ENCODE measurements at regions of chr12 and their contacts with region 1.

Region 1: DNA sequence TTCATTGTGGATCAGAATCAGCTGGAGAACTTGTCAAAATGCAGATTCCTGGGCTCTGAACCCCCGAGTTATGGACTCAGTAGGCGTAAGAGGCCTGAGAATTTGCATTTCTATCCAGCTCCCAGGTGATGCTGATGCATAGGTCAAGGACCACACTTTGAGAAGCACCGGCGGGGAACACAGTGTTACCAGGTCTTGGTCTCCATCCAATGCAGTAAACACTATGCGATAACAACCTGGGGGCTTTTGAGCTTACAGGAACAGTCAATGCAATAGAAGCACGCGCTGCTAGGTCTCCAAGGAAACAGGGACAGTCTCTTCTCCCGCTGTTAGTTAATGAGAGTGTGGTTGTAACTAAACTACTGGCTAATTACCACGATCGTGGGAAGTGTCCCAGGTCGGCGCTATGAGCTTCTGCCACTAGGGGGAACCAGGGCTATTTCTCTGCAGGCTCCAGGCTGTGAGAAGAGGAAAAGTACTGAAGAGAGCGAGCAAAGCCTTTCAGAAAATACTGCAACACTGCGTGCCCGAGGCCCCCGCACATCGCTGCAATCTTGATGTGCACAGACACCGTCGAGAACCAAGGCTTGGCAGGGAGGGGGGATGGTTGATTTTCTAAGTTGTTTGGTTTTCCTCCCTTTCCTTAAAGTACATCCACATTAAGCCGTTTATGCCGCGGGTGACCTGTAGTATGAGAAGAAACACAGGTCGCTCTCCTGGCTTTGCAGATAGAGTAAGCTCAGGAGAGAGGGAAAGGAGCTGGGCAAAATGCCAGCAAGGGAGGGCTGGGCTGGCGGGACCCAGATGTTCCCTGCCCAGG is 52.0 kb upstream of the KCNA1 start:
- DNase-seq: peak; percentile 39
- H3K4me3 ChIP-seq: no peak overlapping the region
- H3K27ac ChIP-seq: no peak overlapping the region
- H3K4me1 ChIP-seq: no peaks in the 10 kb centered on the region
- H3K27me3 ChIP-seq: no peaks in the 10 kb centered on the region
- CTCF ChIP-seq: peak; percentile 88 to 93

Region 2: GRCh38 chr12:4472046-4472445 is 385.6 kb before region 1 on chr12:
- CTCF ChIA-PET with region 1: no interaction called
- dilution Hi-C with region 1: no loop called
- in situ Hi-C with region 1: no loop called
- intact Hi-C with region 1: no loop called
- DNase-seq: no peak
- H3K4me3 ChIP-seq: no peak overlapping the region
- H3K27ac ChIP-seq: no peak overlapping the region
- H3K4me1 ChIP-seq: peaks cover 3% of the 10 kb centered on the region
- H3K27me3 ChIP-seq: no peaks in the 10 kb centered on the region
- CTCF ChIP-seq: no peak

Region 3: GRCh38 chr12:4997939-4998338 is 140.3 kb after region 1 on chr12:
- CTCF ChIA-PET with region 1: interaction called, 3 read pairs
- dilution Hi-C with region 1: no loop called
- in situ Hi-C with region 1: loop called in 1 of 2 experiments (anchors 5 kb)
- intact Hi-C with region 1: loop called (anchors 1 kb)
- DNase-seq: peak; percentile 78
- H3K4me3 ChIP-seq: no peak overlapping the region
- H3K27ac ChIP-seq: no peak overlapping the region
- H3K4me1 ChIP-seq: peaks cover 5% of the 10 kb centered on the region
- H3K27me3 ChIP-seq: no peaks in the 10 kb centered on the region
- CTCF ChIP-seq: no peak

Region 4: DNA sequence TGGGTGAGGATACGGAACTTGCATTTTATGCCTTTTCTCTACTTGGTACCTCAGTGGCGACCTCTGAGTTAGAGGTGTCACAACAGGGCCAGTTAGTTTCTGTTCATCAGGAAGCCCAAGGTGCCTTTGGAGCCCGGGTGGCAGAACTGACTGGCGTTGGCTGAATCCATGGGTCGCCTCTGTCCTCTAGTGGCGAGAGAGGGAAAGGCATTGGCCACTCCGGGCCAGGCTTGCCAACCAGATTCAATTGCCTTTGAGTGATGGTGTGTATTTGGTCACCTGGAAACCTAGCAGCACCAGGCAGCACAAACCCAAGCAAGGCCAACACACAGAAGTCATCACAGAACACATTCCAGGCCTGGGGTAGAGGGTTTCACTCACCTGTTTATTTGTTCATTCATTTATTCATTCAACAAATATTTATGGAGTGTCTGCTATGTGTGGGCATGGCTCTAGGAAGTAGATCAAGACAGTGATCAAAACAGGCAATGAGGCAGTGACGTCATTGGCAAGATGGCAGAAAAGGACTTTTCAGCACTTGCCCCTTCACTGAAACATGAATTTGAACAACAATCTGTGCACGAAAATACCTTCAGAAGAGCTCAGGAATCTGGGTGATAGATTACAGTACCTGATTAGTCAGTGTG is 145.5 kb after region 1 on chr12:
- CTCF ChIA-PET with region 1: interaction called, 3 read pairs
- dilution Hi-C with region 1: no loop called
- in situ Hi-C with region 1: loop called (anchors 5 kb)
- intact Hi-C with region 1: loop called (anchors 1 kb)
- DNase-seq: peak; percentile 41
- H3K4me3 ChIP-seq: no peak overlapping the region
- H3K27ac ChIP-seq: no peak overlapping the region
- H3K4me1 ChIP-seq: no peaks in the 10 kb centered on the region
- H3K27me3 ChIP-seq: peaks cover 1% of the 10 kb centered on the region
- CTCF ChIP-seq: peak; percentile 98 to 100

Region 5: GRCh38 chr12:5008661-5009060 is 151.0 kb after region 1 on chr12:
- CTCF ChIA-PET with region 1: no interaction called
- dilution Hi-C with region 1: no loop called
- in situ Hi-C with region 1: loop called in 1 of 2 experiments (anchors 5 kb)
- intact Hi-C with region 1: loop called (anchors 1 kb)
- DNase-seq: no peak
- H3K4me3 ChIP-seq: no peak overlapping the region
- H3K27ac ChIP-seq: no peak overlapping the region
- H3K4me1 ChIP-seq: no peaks in the 10 kb centered on the region
- H3K27me3 ChIP-seq: peaks cover 1% of the 10 kb centered on the region
- CTCF ChIP-seq: no peak

Region 6: DNA sequence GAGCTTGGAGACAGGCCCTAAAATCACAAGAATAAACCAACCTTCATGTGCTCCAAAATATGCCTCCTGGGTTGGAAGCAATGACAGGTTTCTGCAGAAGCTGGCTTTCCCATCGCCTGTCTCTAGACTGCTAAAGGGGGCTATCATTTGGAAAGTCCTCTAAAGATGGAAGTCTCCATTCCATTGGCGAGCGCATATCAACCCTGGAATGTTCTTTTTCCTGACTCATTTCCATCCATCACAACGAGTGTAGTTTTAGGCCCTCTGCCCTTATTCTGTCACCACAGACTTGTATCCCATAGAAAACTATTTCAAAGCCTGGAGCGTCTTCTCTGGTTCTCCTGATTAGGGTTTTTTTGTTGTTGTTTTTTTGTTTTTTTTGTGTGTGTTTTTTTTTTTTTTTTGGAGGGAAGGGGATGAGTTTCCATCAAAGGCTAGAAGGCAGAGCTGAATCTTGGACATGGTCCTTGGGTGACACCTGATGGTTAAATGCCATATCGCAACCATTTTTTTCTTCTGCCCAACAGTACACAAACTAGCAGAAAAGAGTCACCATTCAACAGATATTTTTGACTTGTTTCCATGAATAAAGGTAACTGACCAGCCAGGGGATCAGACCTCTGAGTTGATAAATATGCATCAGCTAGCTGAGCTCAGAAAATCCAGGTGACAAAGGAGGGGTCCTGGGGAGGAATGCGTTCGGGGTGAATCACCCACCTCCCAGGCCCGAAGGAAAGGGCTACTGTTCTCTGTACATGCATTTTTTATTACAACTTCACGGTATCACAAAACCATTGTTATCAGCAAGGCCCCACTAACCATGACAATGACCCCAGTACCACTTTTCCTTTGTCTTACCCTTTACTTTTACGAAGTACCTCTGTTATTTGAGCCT is 226.5 kb after region 1 on chr12:
- CTCF ChIA-PET with region 1: interaction called, 4 read pairs
- dilution Hi-C with region 1: no loop called
- in situ Hi-C with region 1: loop called (anchors 5 to 25 kb)
- intact Hi-C with region 1: loop called (anchors 1 kb)
- DNase-seq: peak; percentile 40
- H3K4me3 ChIP-seq: no peak overlapping the region
- H3K27ac ChIP-seq: no peak overlapping the region
- H3K4me1 ChIP-seq: peaks cover 9% of the 10 kb centered on the region
- H3K27me3 ChIP-seq: no peaks in the 10 kb centered on the region
- CTCF ChIP-seq: peak; percentile 51 to 78